Stomach (tissue), 19 donors: ENCODE measurements at regions of chr10 and their contacts with region 1.

Region 1: DNA sequence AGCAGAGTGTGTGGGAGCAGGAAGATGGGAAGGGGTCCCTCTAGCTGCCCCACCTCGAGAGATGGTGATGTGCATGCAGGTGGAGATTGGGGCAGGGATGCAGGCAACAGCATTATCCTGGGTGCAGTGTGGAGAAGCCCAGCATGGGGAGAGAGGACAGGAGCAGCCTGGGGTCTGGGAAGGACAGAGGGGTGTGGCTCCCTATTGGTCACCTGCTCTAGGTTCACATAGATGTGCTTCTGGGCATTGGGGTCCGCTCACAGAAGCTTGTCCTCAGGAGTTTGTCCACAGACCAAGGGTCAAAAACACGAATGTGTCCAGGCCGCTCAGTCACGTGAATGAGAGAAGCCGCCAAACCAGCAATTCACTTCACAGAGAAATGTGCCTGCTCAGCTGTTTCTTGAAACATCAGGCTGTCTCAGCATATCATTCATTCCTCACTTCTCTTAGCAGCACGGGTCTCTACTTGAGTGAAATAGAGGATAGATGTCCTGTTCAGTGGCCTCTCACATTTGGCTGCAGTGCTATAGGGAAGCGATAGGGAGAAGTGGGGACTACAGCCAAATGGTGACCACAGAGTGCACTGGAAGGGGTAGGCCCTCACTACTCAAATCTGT is 11.5 kb upstream of the SLC29A3 start:
- DNase-seq: peak in 1 of 2 donors; percentile 60
- H3K4me3 ChIP-seq: no peak overlapping the region
- H3K27ac ChIP-seq: no peak overlapping the region
- H3K4me1 ChIP-seq: no peaks in the 10 kb centered on the region
- H3K27me3 ChIP-seq: peaks cover 0 to under 1% (median 0%) of the 10 kb centered on the region in 3 donors
- CTCF ChIP-seq: no peak
- EP300 ChIP-seq: no peak
- POLR2A ChIP-seq: no peak

Region 2: GRCh38 chr10:71700731-71701368 is 393.3 kb after region 1 on chr10:
- intact Hi-C with region 1: loop called (anchors 5 kb)
- DNase-seq: no peak
- H3K4me3 ChIP-seq: no peak overlapping the region
- H3K27ac ChIP-seq: no peak overlapping the region
- H3K4me1 ChIP-seq: peaks cover 0 to 40% (median 9%) of the 10 kb centered on the region in 4 donors
- H3K27me3 ChIP-seq: no peaks in the 10 kb centered on the region
- CTCF ChIP-seq: no peak
- EP300 ChIP-seq: no peak
- POLR2A ChIP-seq: no peak

Region 3: DNA sequence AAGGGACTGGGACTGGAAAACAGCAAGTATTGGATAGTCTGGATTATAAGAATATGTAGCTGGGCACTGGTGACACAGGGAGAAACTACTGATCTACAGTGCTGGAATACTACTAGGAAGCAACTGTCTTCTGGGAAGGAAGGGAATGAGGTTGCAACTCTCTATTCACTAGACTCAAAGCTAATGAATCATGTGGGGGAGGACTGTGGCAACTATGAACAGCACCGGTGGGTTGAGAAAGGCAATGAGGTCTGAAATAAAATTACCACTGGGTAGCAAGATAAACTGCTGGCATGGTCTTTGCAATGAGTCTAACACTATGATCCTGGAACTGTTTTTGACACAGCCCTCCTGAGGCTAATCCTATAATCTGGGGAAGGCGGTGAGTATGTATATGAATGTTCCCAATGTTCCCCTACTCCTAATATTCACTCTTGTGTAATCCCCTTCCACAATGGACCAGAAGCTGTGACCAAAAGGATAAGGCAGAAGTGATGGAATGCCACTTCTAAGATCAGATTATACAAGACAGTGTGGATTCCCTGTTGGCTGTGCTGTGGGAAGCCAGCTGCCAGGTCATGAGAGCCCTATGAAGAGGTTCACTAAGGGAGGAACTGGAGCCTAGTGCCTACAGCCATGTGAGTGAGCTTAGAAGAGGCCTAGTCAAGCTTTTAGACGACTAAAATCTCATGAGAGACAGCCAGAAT is 1148.5 kb after region 1 on chr10:
- intact Hi-C with region 1: no loop called
- DNase-seq: no peak
- H3K4me3 ChIP-seq: no peak overlapping the region
- H3K27ac ChIP-seq: no peak overlapping the region
- H3K4me1 ChIP-seq: peaks cover 0 to 23% (median 7%) of the 10 kb centered on the region in 4 donors
- H3K27me3 ChIP-seq: no peaks in the 10 kb centered on the region
- CTCF ChIP-seq: no peak
- EP300 ChIP-seq: no peak
- POLR2A ChIP-seq: no peak